Common myeloid progenitor, CD34-positive (primary cell): ENCODE measurements at regions of chr4 and their contacts with region 1.

Region 1: DNA sequence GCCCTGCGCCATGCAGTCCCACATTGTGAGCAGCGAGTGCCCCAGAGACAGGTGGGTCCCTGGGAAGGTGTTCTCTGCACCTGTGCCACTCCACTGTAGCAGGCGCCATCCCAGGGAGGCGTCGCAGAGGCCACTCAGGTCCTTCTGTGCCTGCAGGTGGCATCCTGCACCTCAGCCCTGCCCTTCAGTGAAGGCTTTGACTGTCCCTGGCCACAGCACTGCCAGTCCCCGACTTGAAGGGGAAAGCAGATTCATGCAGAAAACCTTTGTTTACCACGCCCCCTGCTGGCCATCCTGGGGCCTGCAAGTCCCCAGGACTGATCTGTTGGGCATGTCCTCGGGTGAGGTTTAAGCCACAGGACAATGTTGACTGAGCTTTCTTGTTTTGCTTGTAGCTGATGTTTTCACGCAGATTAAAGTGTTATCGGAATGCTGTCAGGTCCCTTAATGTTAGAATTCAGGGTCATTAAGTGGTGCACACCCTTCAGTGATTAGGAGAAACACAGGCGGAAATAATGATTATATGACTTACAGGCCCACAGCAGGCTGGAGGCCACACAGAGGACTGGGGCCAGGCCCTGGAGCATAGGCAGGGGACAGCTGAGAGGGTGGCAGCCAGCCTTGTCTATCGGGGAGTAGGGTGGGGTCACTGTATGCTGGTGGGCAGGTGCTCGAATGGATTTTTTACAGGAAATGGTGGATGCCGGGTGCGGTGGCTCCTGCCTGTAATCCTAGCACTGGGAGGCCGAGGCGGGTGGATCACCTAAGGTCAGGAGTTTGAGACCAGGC is 5.0 kb downstream of the TACC3 start:
- DNase-seq: peak; percentile 87 to 93 (median 90)
- H3K4me3 ChIP-seq: peak overlapping the region in 4 of 7 experiments; percentile 20 to 70 (median 40)
- H3K27ac ChIP-seq: peak overlapping the region; percentile 59 to 68
- H3K4me1 ChIP-seq: peaks cover 12 to 83% (median 75%) of the 10 kb centered on the region in 4 experiments
- H3K27me3 ChIP-seq: no peaks in the 10 kb centered on the region

Region 2: DNA sequence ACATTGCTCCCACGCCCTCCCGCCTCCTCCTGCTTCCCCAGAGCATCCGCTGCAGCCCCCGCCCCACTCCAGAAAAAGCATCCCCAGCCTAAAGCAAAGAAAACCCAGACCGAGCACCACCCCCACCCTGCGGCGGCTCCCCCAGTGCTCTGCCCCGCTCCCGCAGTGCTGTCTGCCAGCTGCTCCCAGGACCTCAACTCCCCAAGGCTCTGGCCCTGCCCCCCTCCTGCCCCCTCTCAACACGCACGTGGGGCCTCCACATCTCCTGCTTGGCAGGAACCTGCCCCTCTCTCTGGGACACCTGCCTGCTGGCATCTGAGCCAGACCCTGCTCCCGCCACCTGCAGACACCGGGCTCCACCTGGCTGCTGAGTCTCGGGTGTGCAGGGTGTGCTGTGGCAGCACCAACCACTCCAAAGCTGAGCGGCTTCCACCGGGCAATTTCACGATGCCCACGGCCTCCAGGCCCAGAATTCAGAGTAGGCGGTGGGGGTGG is 121.6 kb before region 1 on chr4:
- CTCF ChIA-PET with region 1: no interaction called
- POLR2A ChIA-PET with region 1: no interaction called
- DNase-seq: peak in 1 of 3 donors; percentile 34
- H3K4me3 ChIP-seq: no peak overlapping the region
- H3K27ac ChIP-seq: no peak overlapping the region
- H3K4me1 ChIP-seq: peaks cover 0 to 2% (median 0%) of the 10 kb centered on the region in 4 experiments
- H3K27me3 ChIP-seq: peaks cover 0 to 15% (median 0%) of the 10 kb centered on the region in 5 experiments

Region 3: GRCh38 chr4:1666391-1666790 is 59.9 kb before region 1 on chr4:
- CTCF ChIA-PET with region 1: no interaction called
- POLR2A ChIA-PET with region 1: no interaction called
- DNase-seq: no peak
- H3K4me3 ChIP-seq: no peak overlapping the region
- H3K27ac ChIP-seq: no peak overlapping the region
- H3K4me1 ChIP-seq: no peaks in the 10 kb centered on the region
- H3K27me3 ChIP-seq: no peaks in the 10 kb centered on the region

Region 4: GRCh38 chr4:1740021-1740545 is 13.7 kb after region 1 on chr4:
- CTCF ChIA-PET with region 1: interaction called, 38 read pairs
- POLR2A ChIA-PET with region 1: interaction called, 3 read pairs
- DNase-seq: no peak
- H3K4me3 ChIP-seq: no peak overlapping the region
- H3K27ac ChIP-seq: no peak overlapping the region
- H3K4me1 ChIP-seq: no peaks in the 10 kb centered on the region
- H3K27me3 ChIP-seq: no peaks in the 10 kb centered on the region